ENCODE measurements at regions of chr10 and their contacts with region 1.

Region 1: DNA sequence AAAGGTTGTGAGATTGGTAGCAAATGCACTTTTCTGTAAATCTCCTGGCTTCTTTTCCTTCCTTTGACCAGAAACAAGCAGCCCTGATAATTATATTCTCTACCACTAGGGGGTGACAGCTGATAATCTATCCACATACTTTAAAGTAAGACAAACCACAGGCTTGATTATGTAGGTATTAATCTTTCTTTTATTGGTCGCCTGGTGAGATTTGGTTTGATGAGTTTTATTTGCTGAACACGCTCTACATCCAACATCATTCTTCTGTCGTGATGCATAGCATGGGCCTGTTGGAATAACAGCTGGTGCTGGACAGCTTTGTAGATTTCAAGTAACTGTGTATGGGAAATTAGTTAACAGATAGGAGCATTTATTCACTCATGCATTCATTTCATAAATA is 63.5 kb downstream of the ZNF365 start:
- DNase-seq: peak; percentile 29
- H3K4me3 ChIP-seq: no peak overlapping the region; a peak in 1 of 4 replicates
- H3K27ac ChIP-seq: no peak overlapping the region
- H3K4me1 ChIP-seq: peaks cover 0 to 17% of the 10 kb centered on the region in 2 experiments; a peak in 3 of 4 replicates
- H3K27me3 ChIP-seq: no peaks in the 10 kb centered on the region
- CTCF ChIP-seq: peak; percentile 85
- EP300 ChIP-seq: no peak
- RAD21 ChIP-seq: peak; percentile 81

Region 2: DNA sequence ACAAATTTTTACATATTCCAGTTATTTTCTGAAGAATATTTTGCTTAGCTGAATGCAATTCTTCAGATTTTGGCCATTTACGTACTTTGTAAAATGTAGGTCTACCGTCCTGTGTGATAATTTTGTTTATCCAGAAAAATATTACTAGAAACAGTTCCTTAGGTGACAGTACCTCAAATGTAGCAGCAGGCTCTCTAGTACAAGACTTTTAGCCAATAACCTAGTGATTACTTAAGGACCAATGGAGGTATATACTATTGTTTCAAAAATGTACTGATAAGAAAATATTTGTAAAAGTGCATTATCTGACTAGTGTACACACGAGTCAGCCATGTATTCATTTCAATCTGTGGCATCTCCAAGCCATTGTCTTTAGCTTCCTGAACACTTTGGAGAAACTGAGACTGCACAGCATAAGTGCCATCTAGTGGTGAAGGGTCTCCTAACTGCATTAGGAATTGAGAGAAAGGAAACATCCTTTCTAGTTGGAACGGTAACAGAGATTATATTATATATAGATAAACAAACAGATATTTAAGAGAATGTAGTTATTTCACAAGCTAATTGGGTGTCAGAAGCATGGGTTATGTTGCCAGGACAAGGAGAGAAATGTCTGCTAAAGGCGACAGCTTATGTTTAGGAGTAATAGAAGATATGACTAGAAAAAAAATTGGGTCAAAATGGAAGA is 192.8 kb before region 1 on chr10:
- CTCF ChIA-PET with region 1: interaction called, 12 read pairs
- POLR2A ChIA-PET with region 1: no interaction called
- DNase-seq: peak; percentile 30
- H3K4me3 ChIP-seq: peak overlapping the region in 1 of 2 experiments; percentile 20; a peak in 1 of 4 replicates
- H3K27ac ChIP-seq: peak overlapping the region; percentile 40 to 58
- H3K4me1 ChIP-seq: peaks cover 2 to 33% of the 10 kb centered on the region in 2 experiments; a peak in 3 of 4 replicates
- H3K27me3 ChIP-seq: no peaks in the 10 kb centered on the region
- CTCF ChIP-seq: peak; percentile 96
- EP300 ChIP-seq: no peak
- RAD21 ChIP-seq: peak; percentile 97

Region 3: GRCh38 chr10:62422068-62422590 is 15.6 kb before region 1 on chr10:
- CTCF ChIA-PET with region 1: interaction called, 24 read pairs
- POLR2A ChIA-PET with region 1: no interaction called
- DNase-seq: no peak
- H3K4me3 ChIP-seq: no peak overlapping the region
- H3K27ac ChIP-seq: peak overlapping the region in 1 of 2 experiments; percentile 78; a peak in 3 of 4 replicates
- H3K4me1 ChIP-seq: peaks cover 0 to 18% of the 10 kb centered on the region in 2 experiments; a peak in 1 of 4 replicates
- H3K27me3 ChIP-seq: no peaks in the 10 kb centered on the region
- CTCF ChIP-seq: peak; percentile 42
- EP300 ChIP-seq: peak in 1 of 2 experiments; percentile 78; a peak in 2 of 4 replicates
- RAD21 ChIP-seq: no peak

Region 4: DNA sequence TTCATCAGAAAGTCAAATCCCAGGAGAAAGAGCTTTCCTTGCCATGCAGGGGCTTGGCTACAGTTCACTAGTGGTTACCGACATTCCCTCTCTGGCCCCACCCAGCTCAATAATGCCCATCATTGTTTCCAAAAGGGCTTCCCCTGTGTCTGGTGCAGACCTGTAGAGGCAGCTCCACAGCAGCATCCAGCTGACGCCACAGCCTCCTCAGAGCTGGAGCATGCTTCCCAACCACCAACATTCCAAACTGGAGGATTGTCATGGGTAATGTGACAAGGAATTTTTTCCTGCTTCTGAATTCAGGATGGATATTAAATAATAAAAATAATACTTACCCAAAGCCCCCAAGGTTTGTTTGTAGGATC is 13.9 kb after region 1 on chr10:
- CTCF ChIA-PET with region 1: interaction called, 35 read pairs
- POLR2A ChIA-PET with region 1: no interaction called
- DNase-seq: no peak
- H3K4me3 ChIP-seq: no peak overlapping the region
- H3K27ac ChIP-seq: no peak overlapping the region
- H3K4me1 ChIP-seq: no peaks in the 10 kb centered on the region; a peak in 1 of 4 replicates
- H3K27me3 ChIP-seq: no peaks in the 10 kb centered on the region
- CTCF ChIP-seq: no peak
- EP300 ChIP-seq: no peak
- RAD21 ChIP-seq: no peak

Region 5: DNA sequence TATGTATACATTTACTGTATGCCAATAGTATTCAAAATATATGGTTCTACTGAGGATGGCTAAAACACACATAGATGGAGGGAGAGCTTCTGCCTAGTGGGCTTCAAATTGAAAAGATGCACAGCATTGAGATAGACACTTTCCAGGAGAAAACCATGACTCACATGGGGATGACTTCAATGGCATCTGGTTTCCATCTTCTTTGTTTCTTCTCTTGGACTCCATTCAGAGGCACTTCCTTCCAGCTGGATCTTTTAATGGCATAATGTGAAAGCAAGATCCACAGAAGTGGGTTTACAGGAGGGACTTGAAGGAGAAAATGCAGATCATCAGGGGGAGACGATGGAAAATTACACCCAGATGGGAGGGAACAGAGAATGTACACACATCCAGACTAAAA is 21.4 kb after region 1 on chr10:
- CTCF ChIA-PET with region 1: interaction called, 10 read pairs
- POLR2A ChIA-PET with region 1: no interaction called
- DNase-seq: no peak
- H3K4me3 ChIP-seq: no peak overlapping the region
- H3K27ac ChIP-seq: peak overlapping the region; percentile 70 to 78
- H3K4me1 ChIP-seq: peaks cover 0 to 2% of the 10 kb centered on the region in 2 experiments; a peak in 2 of 4 replicates
- H3K27me3 ChIP-seq: no peaks in the 10 kb centered on the region
- CTCF ChIP-seq: no peak
- EP300 ChIP-seq: peak; percentile 51 to 94; a peak in 3 of 4 replicates
- RAD21 ChIP-seq: no peak

Region 6: GRCh38 chr10:62816331-62817120 is 378.8 kb after region 1 on chr10 and contains the start of gene EGR2:
- CTCF ChIA-PET with region 1: interaction called, 11 read pairs
- POLR2A ChIA-PET with region 1: no interaction called
- DNase-seq: peak; percentile 92
- H3K4me3 ChIP-seq: peak within 1 kb of the TSS; percentile 71 to 73
- H3K27ac ChIP-seq: peak within 1 kb of the TSS in 1 of 2 experiments; percentile 72; a peak in 2 of 4 replicates
- H3K4me1 ChIP-seq: peaks cover 12 to 28% of the 10 kb centered on the region in 2 experiments; a peak in 3 of 4 replicates
- H3K27me3 ChIP-seq: peaks cover 49% of the 10 kb centered on the region
- CTCF ChIP-seq: no peak
- EP300 ChIP-seq: no peak
- RAD21 ChIP-seq: no peak
- polyA plus RNA-seq, gene EGR2: 0.25 and 0.47 TPM in 2 replicates

Region 7: DNA sequence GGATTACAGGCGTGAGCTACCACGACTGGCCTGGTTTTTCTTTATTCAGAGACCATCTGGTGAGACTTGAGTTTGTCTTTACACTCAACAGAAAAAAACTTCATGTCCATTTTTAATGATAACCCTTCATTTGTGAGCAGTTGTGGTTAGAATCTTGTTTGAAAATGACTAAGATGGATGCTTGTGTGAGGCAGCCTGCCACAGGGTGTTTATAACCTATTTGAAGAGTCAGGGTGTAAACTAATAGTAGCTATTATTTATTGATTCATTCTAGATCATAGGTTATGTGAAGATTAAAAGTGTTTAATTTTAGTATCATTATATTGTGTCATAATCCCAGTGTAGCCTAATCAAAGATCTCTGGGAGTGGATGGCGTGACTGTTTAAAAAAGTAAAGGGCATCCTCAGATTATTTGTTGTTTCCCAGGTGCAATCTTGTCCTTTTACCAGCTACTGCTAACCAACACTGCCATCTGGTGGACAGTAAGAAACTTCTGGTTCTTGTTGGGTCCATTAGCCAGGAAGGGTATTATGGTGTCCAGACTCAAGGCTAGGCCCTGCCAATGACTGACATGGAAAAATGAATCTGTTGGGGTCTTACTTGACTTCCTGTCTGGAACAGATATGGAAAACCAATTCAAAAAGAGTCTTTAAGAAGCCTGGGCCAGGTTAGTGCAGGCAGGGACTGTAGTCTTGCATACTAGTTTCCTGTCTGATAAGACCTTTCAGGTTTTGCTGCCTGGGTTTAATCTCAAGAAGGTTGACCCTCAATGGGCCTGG is 720.3 kb after region 1 on chr10:
- CTCF ChIA-PET with region 1: interaction called, 12 read pairs
- POLR2A ChIA-PET with region 1: no interaction called
- DNase-seq: peak; percentile 54
- H3K4me3 ChIP-seq: no peak overlapping the region
- H3K27ac ChIP-seq: no peak overlapping the region
- H3K4me1 ChIP-seq: no peaks in the 10 kb centered on the region
- H3K27me3 ChIP-seq: no peaks in the 10 kb centered on the region
- CTCF ChIP-seq: peak; percentile 88
- EP300 ChIP-seq: no peak
- RAD21 ChIP-seq: peak; percentile 91

Measured in SK-N-SH (cell line).